ENCODE measurements at regions of chr13 and their contacts with region 1.

Region 1: DNA sequence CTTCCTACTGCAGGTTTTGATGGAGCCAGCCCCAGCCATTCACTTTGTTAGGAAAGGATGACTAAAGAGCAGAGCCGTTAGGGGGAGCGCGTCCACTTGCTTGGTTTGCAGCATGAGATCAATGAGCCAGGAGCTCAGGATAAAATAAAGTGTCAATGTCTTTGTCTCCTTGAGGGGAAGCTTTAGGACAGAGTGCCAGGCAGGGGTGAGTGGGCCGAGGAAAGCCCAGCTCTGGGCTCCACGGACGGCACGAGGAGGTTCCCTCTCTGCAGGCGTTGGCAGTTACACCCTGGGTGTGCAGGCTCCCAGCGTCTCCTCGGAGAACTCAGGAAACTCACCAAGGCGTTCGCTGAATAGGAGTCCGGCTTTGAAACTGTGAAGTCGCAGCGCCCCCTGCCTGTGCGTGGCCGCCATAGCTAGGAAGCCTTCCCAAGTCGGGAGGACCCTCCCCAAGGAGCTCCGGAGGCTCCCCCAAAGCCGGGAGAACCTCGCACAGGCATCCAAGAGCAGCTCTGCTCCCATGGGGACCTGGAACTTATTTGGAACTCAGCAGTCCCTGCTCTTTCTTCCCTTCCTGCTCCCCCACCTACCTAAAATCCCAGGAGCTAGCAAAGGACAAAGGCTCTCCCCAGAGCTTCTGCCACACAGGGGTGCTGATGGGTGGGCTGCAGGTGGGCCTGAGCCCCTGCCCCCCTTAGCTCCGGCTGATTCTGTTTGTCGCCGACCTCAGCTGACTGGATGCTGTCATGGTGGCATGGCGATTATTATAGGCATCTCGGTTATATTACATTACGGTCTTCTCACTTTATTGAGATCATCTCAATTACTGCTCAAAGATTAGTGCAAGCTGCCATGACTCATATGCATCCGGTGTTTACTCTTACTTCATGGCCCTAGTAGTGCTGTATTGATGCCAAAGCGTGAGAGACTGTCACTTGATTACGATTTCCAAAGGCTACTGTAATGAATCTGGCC is 34.4 kb downstream of the GSX1 start:
- DNase-seq: peak; percentile 79
- H3K4me3 ChIP-seq: peak overlapping the region; percentile 42
- H3K27ac ChIP-seq: no peak overlapping the region
- H3K4me1 ChIP-seq: no peaks in the 10 kb centered on the region
- CTCF ChIP-seq: peak; percentile 96

Region 2: GRCh38 chr13:26985285-26985878 is 841.3 kb before region 1 on chr13:
- CTCF ChIA-PET with region 1: no interaction called
- POLR2A ChIA-PET with region 1: no interaction called
- intact Hi-C with region 1: loop called (anchors 10 kb)
- DNase-seq: peak; percentile 82
- H3K4me3 ChIP-seq: no peak overlapping the region
- H3K27ac ChIP-seq: no peak overlapping the region
- H3K4me1 ChIP-seq: no peaks in the 10 kb centered on the region
- CTCF ChIP-seq: peak; percentile 94

Region 3: GRCh38 chr13:27374650-27375049 is 452.0 kb before region 1 on chr13:
- CTCF ChIA-PET with region 1: interaction called, 4 read pairs
- POLR2A ChIA-PET with region 1: no interaction called
- intact Hi-C with region 1: loop called (anchors 1 kb)
- DNase-seq: peak; percentile 68
- H3K4me3 ChIP-seq: no peak overlapping the region
- H3K27ac ChIP-seq: no peak overlapping the region
- H3K4me1 ChIP-seq: no peaks in the 10 kb centered on the region
- CTCF ChIP-seq: peak; percentile 91

Region 4: GRCh38 chr13:27481766-27482165 is 344.9 kb before region 1 on chr13:
- CTCF ChIA-PET with region 1: no interaction called
- POLR2A ChIA-PET with region 1: no interaction called
- intact Hi-C with region 1: loop called (anchors 2 kb)
- DNase-seq: peak; percentile 43
- H3K4me3 ChIP-seq: no peak overlapping the region
- H3K27ac ChIP-seq: no peak overlapping the region
- H3K4me1 ChIP-seq: peaks cover 21% of the 10 kb centered on the region
- CTCF ChIP-seq: peak; percentile 80

Region 5: DNA sequence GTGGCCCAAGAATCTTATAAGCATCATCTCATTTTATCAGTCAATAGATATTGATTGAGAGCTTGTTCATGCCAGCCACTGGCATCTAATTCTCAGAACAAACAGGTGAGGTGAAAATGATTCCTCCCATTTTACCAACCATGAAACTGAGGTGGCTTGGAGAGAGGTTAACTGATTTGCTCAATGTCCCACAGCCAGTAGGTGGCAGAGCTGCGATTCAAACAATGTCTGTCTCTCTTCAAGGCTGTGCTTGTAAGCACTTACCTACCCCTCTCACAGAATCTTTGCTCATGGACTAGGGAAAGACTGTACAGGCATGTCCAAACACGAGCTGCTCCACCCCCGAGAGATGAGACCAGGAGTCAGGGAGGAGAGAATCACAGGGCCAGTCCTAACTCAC is 55.9 kb before region 1 on chr13:
- CTCF ChIA-PET with region 1: interaction called, 5 read pairs
- POLR2A ChIA-PET with region 1: interaction called, 4 read pairs
- intact Hi-C with region 1: loop called (anchors 1 kb)
- DNase-seq: peak; percentile 57
- H3K4me3 ChIP-seq: no peak overlapping the region
- H3K27ac ChIP-seq: no peak overlapping the region
- H3K4me1 ChIP-seq: peaks cover 15% of the 10 kb centered on the region
- CTCF ChIP-seq: peak; percentile 80

Measured in OCI-LY7 (cell line).